ENCODE measurements at regions of chr2 and their contacts with region 1.

Region 1: DNA sequence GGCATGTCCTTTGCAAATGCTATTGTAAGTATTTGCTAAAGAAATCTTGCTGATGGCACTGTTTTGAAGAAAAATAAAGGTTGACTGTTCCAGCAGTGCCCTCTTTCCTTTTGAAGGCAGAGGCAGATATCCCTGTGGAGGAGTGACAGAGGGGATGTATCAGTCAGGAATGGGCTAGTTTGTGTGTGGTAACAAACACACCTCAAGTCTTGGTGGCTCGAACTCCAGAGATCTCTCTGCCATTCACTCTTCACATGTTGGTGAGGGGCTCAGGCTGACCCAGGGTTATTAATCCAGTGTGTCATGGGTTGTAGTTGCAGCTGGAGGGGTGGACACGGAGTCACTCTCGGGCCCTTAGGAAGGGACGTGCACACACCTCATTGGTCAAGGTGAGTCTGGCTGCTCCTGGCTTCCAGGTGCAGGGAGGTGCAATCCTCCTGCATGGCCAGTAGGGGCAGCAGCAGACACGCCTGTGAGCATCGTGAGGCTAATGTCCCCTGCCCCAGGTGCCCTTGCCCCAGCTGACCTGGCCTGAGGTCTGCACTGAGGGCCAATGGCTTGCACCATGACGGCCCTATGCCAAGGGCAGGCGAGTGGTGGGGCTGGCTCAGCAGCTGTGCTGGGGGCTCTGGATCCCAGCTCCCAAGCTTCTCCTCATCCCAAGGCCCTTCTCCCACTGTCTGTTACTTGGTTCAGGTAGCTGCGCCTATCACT is 146.5 kb downstream of the ASB1 start:
- DNase-seq: peak in 1 of 2 experiments; percentile 35
- H3K4me3 ChIP-seq: no peak overlapping the region
- H3K27ac ChIP-seq: no peak overlapping the region
- H3K4me1 ChIP-seq: no peaks in the 10 kb centered on the region
- H3K27me3 ChIP-seq: peaks cover 89% of the 10 kb centered on the region
- CTCF ChIP-seq: peak; percentile 84

Region 2: DNA sequence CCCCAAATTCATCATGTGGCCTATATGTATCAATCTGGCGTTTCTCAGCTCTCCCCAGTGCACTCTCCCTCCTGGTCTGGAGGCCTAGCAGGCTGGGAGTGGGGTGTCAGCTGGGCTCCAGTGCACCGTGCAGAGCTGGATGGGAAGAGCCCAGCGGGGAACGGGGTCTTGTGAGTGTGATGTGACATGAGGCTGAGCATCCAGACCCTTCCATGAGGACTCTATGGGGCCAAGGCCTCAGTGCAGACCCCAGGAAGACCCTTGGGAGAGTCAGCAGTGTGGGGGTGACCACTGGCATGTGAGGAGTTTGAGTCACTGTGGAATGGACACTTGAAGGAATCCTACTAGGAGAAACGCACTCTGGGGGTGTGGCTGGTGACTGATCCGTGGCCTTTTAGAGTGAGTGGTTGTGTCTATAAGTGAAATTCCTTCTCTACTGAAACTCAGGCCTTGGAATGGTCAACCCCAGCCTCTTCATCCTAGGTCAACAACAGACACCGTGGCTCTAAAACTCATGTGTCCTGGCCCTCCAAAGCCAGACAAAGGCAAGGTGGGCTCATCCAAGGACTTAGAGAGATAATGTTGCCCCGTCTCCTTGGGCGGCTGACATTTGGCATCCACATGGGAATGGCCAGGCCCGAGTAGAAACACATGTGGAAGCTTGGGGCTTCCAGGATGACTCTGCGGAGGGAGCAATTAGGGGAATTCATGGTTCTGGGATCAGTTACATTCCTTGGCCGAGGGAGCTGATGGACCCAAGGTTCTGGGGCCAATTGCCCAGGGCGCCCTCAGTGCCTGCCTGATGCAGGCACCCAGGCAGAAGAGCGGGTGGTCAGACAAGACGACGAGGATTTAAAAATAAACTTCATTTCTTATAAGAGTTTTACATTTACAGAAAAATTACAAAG is 118.6 kb after region 1 on chr2:
- CTCF ChIA-PET with region 1: no interaction called
- POLR2A ChIA-PET with region 1: no interaction called
- intact Hi-C with region 1: no loop called
- DNase-seq: no peak
- H3K4me3 ChIP-seq: no peak overlapping the region
- H3K27ac ChIP-seq: no peak overlapping the region
- H3K4me1 ChIP-seq: 0 out of 2 replicates have a peak, but pooled peaks cover 5% of the 10 kb centered on the region
- H3K27me3 ChIP-seq: peaks cover 77% of the 10 kb centered on the region
- CTCF ChIP-seq: no peak

Region 3: GRCh38 chr2:238706673-238707072 is 133.5 kb after region 1 on chr2:
- CTCF ChIA-PET with region 1: no interaction called
- POLR2A ChIA-PET with region 1: no interaction called
- intact Hi-C with region 1: loop called (anchors 10 kb)
- DNase-seq: no peak
- H3K4me3 ChIP-seq: no peak overlapping the region
- H3K27ac ChIP-seq: no peak overlapping the region
- H3K4me1 ChIP-seq: no peaks in the 10 kb centered on the region
- H3K27me3 ChIP-seq: peaks cover 49% of the 10 kb centered on the region
- CTCF ChIP-seq: peak; percentile 69

Measured in PC-9 (cell line).